ENCODE measurements at regions of chr3 and their contacts with region 1.

Region 1: DNA sequence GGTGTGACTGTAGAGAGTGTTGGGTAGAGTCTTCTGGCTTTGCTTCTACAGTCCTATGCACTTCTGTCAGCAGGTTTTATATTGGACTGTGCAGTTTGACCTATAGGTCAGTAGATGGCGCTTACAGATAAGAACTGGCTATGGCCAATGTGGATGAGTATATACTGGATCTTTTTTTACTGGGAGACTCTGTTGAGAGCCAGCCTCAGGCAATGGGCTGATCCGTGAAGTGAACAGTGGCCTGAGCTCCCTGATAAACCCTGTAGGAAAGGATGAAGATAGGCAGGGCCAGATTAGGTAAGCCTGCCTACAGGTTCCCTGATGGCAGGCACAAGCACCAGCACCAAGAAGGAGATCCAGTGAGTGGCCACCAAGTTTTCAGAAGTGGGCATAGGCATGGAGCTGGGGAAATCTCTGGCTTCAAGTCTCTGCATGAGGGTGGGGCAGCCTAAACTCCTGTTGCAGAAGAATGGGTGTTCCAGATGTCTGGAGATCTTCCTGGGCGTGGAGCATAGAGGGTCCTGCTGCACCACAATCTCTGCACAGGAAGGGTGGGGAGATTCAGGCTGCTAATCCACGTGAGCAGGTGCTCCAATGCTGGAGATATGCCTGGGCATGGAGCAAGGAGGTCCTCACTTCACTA is 326.0 kb upstream of the SGO1 start:
- DNase-seq: peak in 3 of 4 experiments; percentile 16 to 60 (median 31)
- ATAC-seq: peak; percentile 90
- H3K4me3 ChIP-seq: no peak overlapping the region
- H3K27ac ChIP-seq: no peak overlapping the region
- H3K4me1 ChIP-seq: no peaks in the 10 kb centered on the region
- H3K27me3 ChIP-seq: no peaks in the 10 kb centered on the region
- CTCF ChIP-seq: peak; percentile 44 to 69 (median 59); a peak in 4 of 6 replicates
- EP300 ChIP-seq: no peak
- POLR2A ChIP-seq: no peak
- RAD21 ChIP-seq: peak; percentile 86 to 87

Region 2: DNA sequence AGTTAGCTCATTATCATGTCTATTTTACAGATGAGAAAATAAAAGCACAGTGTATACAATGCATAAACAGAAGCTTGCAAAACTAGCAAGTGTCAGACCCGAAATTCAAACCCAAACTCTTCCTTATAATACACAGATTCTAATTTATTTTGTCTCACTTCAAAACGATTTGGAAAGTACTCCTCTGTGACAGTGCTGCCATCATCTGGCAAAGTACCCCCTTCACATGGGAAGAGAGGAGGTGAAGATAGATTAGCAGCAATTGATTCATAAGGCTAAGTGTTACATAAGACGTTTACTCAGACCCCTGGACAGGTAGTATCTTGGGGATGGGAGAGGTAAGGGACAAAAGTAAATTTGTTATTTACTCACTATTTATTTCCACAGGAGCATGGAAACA is 418.1 kb after region 1 on chr3:
- CTCF ChIA-PET with region 1: interaction called, 5 read pairs
- POLR2A ChIA-PET with region 1: no interaction called
- in situ Hi-C with region 1: no loop called
- intact Hi-C with region 1: loop called (anchors 1 kb)
- DNase-seq: peak; percentile 14 to 41 (median 26)
- ATAC-seq: peak; percentile 83
- H3K4me3 ChIP-seq: no peak overlapping the region
- H3K27ac ChIP-seq: no peak overlapping the region
- H3K4me1 ChIP-seq: no peaks in the 10 kb centered on the region
- H3K27me3 ChIP-seq: no peaks in the 10 kb centered on the region
- CTCF ChIP-seq: peak; percentile 34 to 60 (median 55); a peak in 4 of 6 replicates
- EP300 ChIP-seq: no peak
- POLR2A ChIP-seq: no peak
- RAD21 ChIP-seq: peak; percentile 52 to 76

Region 3: DNA sequence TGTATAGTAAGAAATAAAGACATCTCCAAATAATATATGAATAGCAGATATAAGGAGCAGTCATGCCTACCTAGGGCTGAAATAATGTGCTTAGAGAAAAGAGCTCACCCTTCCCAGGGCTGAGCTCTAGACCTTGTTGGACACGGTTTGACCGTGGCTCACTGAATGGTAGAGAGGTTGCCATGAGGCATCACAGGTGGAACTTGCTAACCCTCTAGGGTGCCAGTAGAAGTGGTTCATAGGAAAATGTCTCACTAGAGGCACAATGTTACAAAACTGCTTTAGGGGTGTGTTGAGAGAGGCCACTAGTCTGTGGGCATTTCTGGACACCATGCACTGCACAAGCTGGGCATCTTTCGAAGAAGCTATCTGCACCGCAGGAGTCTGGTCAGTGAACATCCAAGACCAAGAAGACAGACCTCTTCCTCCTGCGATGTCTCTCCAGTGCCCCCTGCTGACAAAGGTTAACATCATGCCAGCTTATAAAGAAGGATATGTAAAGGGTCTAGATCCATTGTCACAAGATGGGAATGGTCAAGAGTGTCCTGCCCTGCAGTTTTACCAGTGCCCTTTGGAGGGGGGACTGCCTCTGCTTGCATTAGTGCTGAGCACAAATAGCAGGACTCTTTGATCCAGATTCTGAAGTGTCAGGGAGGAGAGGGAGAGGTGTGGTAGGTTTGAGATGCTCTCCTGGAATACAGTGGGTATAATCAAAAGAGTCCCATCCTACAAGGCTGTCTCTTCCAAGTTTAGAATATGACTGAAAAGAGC is 972.3 kb after region 1 on chr3:
- CTCF ChIA-PET with region 1: interaction called, 4 read pairs
- POLR2A ChIA-PET with region 1: no interaction called
- in situ Hi-C with region 1: no loop called
- intact Hi-C with region 1: loop called (anchors 5 kb)
- DNase-seq: peak; percentile 21 to 72 (median 24)
- ATAC-seq: peak; percentile 87
- H3K4me3 ChIP-seq: no peak overlapping the region
- H3K27ac ChIP-seq: no peak overlapping the region
- H3K4me1 ChIP-seq: no peaks in the 10 kb centered on the region; a peak in 1 of 5 replicates
- H3K27me3 ChIP-seq: no peaks in the 10 kb centered on the region
- CTCF ChIP-seq: peak; percentile 59 to 67 (median 65)
- EP300 ChIP-seq: no peak
- POLR2A ChIP-seq: no peak
- RAD21 ChIP-seq: peak; percentile 64 to 82

Region 4: DNA sequence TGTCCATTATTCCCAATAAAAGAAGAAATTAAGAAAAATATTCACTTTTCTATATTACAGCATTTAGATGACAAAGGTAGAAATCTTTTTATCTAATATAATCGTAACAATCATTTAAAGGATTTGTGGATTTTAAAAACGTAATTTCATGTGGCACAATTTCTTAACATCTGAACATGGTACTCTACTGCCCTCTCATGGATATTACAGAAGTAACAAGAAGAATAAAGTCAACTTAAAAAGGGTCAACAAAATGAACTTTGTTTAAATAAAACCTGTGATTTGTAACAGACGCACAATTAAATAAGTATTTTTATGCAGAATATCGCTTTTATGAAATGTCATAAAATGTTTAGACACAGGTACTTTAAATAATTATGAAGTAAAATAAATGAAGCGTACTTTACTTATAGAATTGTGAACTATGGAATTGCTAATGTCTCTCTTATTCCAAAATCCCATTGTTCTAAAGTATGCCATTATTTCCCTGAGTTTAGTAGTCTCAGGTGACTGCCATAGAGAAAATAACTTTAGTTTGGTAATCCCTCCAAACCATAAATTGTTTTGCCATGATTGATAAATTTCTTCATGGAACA is 1605.9 kb after region 1 on chr3:
- CTCF ChIA-PET with region 1: no interaction called
- POLR2A ChIA-PET with region 1: no interaction called
- in situ Hi-C with region 1: no loop called
- intact Hi-C with region 1: loop called (anchors 5 kb)
- DNase-seq: peak; percentile 7 to 47 (median 12)
- ATAC-seq: no peak
- H3K4me3 ChIP-seq: no peak overlapping the region
- H3K27ac ChIP-seq: no peak overlapping the region
- H3K4me1 ChIP-seq: no peaks in the 10 kb centered on the region
- H3K27me3 ChIP-seq: no peaks in the 10 kb centered on the region
- CTCF ChIP-seq: peak; percentile 6 to 65 (median 26); a peak in 3 of 6 replicates
- EP300 ChIP-seq: no peak
- POLR2A ChIP-seq: no peak
- RAD21 ChIP-seq: peak; percentile 74 to 81

Measured in K562 (cell line).